ENCODE measurements at regions of chr6 and their contacts with region 1.

Region 1: GRCh38 chr6:18503593-18504231 is 116.6 kb downstream of the RNF144B start:
- DNase-seq: peak; percentile 64
- H3K4me3 ChIP-seq: peak overlapping the region; percentile 0 to 34 (median 21)
- H3K27ac ChIP-seq: peak overlapping the region; percentile 66
- H3K4me1 ChIP-seq: peaks cover 18% of the 10 kb centered on the region
- H3K27me3 ChIP-seq: no peaks in the 10 kb centered on the region
- CTCF ChIP-seq: peak; percentile 95 to 98

Region 2: DNA sequence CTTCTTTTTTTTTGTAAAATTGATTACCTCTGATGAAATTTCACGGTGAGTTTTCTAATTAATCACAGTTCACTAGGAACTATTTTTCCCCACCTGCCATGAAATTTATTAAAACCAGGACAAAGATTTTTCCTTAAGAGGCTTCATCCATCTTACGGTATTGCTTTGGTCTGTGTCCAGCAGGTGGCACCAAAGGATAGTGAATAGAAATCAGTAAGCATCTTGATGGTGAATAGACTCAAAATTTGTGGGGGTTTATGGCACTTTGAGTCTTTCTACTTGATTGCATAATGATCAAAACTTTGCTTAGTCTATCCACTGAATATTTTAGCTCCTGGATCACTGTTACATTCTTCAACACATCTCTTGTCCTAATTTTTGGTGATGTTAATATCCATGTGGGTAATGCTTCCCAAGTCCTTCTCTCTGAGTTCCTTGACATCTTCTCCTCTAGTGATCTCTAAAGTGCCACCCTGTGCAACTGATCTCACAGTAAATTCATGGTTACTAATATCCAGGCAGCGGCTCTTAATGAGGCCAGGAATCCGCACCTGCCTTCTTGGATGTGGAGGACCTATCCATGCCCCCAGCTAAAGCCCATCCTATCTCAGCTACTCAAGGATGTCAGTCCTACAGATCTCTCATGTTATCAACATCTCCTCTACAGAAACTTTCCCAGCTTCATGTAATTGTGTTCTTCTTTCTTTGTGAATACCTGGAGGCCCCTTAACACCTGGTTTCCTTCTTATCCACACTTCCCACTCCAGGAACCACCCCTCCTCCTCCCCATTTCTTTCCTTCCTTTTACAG is 1347.4 kb before region 1 on chr6:
- CTCF ChIA-PET with region 1: no interaction called
- dilution Hi-C with region 1: no loop called
- in situ Hi-C with region 1: no loop called
- intact Hi-C with region 1: loop called (anchors 10 kb)
- DNase-seq: peak; percentile 49
- H3K4me3 ChIP-seq: no peak overlapping the region
- H3K27ac ChIP-seq: no peak overlapping the region
- H3K4me1 ChIP-seq: no peaks in the 10 kb centered on the region
- H3K27me3 ChIP-seq: no peaks in the 10 kb centered on the region
- CTCF ChIP-seq: peak; percentile 73 to 77

Region 3: GRCh38 chr6:17884498-17885478 is 618.9 kb before region 1 on chr6:
- CTCF ChIA-PET with region 1: no interaction called
- dilution Hi-C with region 1: no loop called
- in situ Hi-C with region 1: no loop called
- intact Hi-C with region 1: loop called (anchors 10 kb)
- DNase-seq: peak; percentile 17
- H3K4me3 ChIP-seq: no peak overlapping the region
- H3K27ac ChIP-seq: no peak overlapping the region
- H3K4me1 ChIP-seq: peaks cover 13% of the 10 kb centered on the region
- H3K27me3 ChIP-seq: no peaks in the 10 kb centered on the region
- CTCF ChIP-seq: no peak

Region 4: GRCh38 chr6:18264219-18264922 is 239.3 kb before region 1 on chr6 and contains the start of gene DEK:
- CTCF ChIA-PET with region 1: no interaction called
- dilution Hi-C with region 1: no loop called
- in situ Hi-C with region 1: no loop called
- intact Hi-C with region 1: loop called (anchors 1 kb)
- DNase-seq: peak; percentile 74
- H3K4me3 ChIP-seq: peak within 1 kb of the TSS; percentile 72 to 91 (median 82)
- H3K27ac ChIP-seq: peak within 1 kb of the TSS; percentile 77
- H3K4me1 ChIP-seq: peaks cover 41% of the 10 kb centered on the region
- H3K27me3 ChIP-seq: no peaks in the 10 kb centered on the region
- CTCF ChIP-seq: peak; percentile 19 to 61
- total RNA-seq, gene DEK: 34.5 to 103 TPM

Region 5: DNA sequence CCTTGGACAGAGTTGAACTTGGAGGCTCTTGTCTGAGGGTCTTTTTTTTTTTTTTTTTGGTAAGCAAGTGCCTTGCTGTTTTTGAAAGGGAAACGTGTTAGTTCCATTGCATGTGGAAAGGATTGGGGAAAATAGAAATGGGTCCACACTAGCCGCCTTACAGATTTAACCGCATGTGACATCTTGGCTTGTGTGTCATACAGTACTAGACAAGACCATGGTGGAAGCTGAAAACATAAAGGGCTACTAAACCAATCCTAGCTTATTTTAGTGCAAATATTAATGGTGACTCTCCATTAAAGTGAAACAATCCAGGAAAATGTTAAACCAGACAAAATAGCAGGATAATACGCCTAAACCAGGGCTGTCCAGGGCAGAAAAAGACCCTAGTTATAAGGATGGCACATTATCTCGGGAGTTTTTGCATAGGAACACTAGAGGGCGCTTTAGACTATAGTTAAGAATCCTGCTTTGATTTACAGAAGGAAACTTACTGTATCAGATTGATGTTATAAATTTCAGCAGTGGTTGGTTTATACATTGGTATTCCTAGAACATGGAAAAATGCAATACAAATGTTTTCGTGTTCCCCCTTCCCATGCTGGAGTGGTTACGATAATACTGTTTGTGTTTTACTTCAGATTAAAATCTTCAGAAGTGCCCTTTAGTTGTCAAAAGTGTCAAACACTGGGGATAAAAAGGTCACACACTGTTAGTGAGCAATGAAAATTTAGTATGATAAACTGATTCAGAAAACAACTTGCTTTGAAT is 179.6 kb before region 1 on chr6:
- CTCF ChIA-PET with region 1: no interaction called
- dilution Hi-C with region 1: no loop called
- in situ Hi-C with region 1: loop called (anchors 5 to 10 kb)
- intact Hi-C with region 1: loop called (anchors 1 kb)
- DNase-seq: peak; percentile 40
- H3K4me3 ChIP-seq: no peak overlapping the region
- H3K27ac ChIP-seq: no peak overlapping the region
- H3K4me1 ChIP-seq: peaks cover 23% of the 10 kb centered on the region
- H3K27me3 ChIP-seq: no peaks in the 10 kb centered on the region
- CTCF ChIP-seq: peak; percentile 58 to 66

Region 6: GRCh38 chr6:18387061-18387721 is 116.5 kb before region 1 on chr6 and contains the start of gene RNF144B:
- CTCF ChIA-PET with region 1: no interaction called
- dilution Hi-C with region 1: loop called (anchors 25 kb)
- in situ Hi-C with region 1: no loop called
- intact Hi-C with region 1: loop called (anchors 1 kb)
- DNase-seq: peak; percentile 95
- H3K4me3 ChIP-seq: peak within 1 kb of the TSS; percentile 81 to 89 (median 85)
- H3K27ac ChIP-seq: peak within 1 kb of the TSS; percentile 98
- H3K4me1 ChIP-seq: peaks cover 24% of the 10 kb centered on the region
- H3K27me3 ChIP-seq: no peaks in the 10 kb centered on the region
- CTCF ChIP-seq: peak in 1 of 2 donors; percentile 5
- total RNA-seq, gene RNF144B: 45.7 to 74.7 TPM

Region 7: DNA sequence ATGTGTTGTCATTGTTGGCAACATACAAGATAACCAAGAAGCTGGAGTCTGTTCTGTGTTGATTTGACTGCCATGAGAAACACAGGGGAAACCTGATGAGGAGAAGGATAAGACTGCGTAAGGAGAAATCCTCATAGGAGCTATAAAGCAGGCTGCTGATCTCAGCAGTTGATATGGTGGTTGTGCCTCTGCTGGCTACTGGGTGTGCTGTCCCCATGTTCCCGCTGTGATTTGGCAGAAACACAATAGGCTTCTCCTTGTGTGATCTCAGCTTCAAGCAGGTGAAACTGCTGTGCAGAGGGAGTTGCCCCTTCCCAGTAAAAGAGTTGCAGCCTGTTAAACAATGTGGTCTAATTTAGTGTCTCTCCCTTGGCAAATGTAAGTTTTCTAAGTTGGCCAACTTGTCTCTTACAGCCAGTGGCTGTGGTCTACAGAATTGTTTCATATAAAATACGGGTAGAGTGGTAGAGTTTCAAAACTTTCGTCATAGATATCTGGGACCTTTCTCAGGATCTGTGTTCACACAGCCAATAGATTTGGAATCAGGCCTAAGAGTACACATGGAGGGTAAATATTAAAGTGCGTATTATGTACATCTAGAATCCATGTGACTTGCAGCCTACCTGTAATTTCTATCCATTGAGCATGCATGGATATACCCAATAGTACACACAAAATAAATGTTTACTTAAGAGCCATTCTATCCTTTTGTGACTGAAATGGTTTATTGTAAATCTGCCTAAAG is 38.1 kb before region 1 on chr6:
- CTCF ChIA-PET with region 1: no interaction called
- dilution Hi-C with region 1: no loop called
- in situ Hi-C with region 1: no loop called
- intact Hi-C with region 1: no loop called
- DNase-seq: no peak
- H3K4me3 ChIP-seq: no peak overlapping the region
- H3K27ac ChIP-seq: no peak overlapping the region
- H3K4me1 ChIP-seq: no peaks in the 10 kb centered on the region
- H3K27me3 ChIP-seq: no peaks in the 10 kb centered on the region
- CTCF ChIP-seq: no peak

Region 8: GRCh38 chr6:18595774-18596530 is 92.2 kb after region 1 on chr6:
- CTCF ChIA-PET with region 1: no interaction called
- dilution Hi-C with region 1: no loop called
- in situ Hi-C with region 1: no loop called
- intact Hi-C with region 1: no loop called
- DNase-seq: peak; percentile 36
- H3K4me3 ChIP-seq: no peak overlapping the region
- H3K27ac ChIP-seq: no peak overlapping the region
- H3K4me1 ChIP-seq: no peaks in the 10 kb centered on the region
- H3K27me3 ChIP-seq: no peaks in the 10 kb centered on the region
- CTCF ChIP-seq: peak; percentile 94 to 97